Motor neuron (in vitro differentiated cells): ENCODE measurements at regions of chr9 and their contacts with region 1.

Region 1: GRCh38 chr9:69674700-69675366 is 2.7 kb upstream of the APBA1 start:
- ATAC-seq: no peak
- H3K4me3 ChIP-seq: no peak overlapping the region
- H3K27ac ChIP-seq: no peak overlapping the region
- H3K4me1 ChIP-seq: peaks cover 4 to 6% of the 10 kb centered on the region in 2 donors

Region 2: GRCh38 chr9:69582544-69583297 is 92.1 kb before region 1 on chr9:
- in situ Hi-C with region 1: loop called in 1 of 9 experiments (anchors 25 kb)
- ATAC-seq: no peak
- H3K4me3 ChIP-seq: no peak overlapping the region
- H3K27ac ChIP-seq: no peak overlapping the region
- H3K4me1 ChIP-seq: peaks cover 4 to 5% of the 10 kb centered on the region in 2 donors

Region 3: GRCh38 chr9:69877854-69878514 is 203.2 kb after region 1 on chr9:
- in situ Hi-C with region 1: loop called in 1 of 9 experiments (anchors 25 kb)
- ATAC-seq: peak in 3 of 8 experiments; percentile 85 to 93 (median 92)
- H3K4me3 ChIP-seq: no peak overlapping the region
- H3K27ac ChIP-seq: no peak overlapping the region
- H3K4me1 ChIP-seq: peaks cover 10% of the 10 kb centered on the region in 2 donors